CD8-positive, alpha-beta T cell (primary cell): ENCODE measurements at regions of chr12 and their contacts with region 1.

Region 1: GRCh38 chr12:100168586-100168985 is 25.9 kb upstream of the BLTP3B start:
- DNase-seq: no peak
- ATAC-seq: no peak
- H3K4me3 ChIP-seq: no peak overlapping the region
- H3K4me3 Mint-ChIP-seq: no peak overlapping the region
- H3K27ac ChIP-seq: no peak overlapping the region
- H3K27ac Mint-ChIP-seq: no peak overlapping the region
- H3K4me1 ChIP-seq: peaks cover 6% of the 10 kb centered on the region
- H3K4me1 Mint-ChIP-seq: peaks cover 6% of the 10 kb centered on the region
- H3K27me3 ChIP-seq: no peaks in the 10 kb centered on the region
- H3K27me3 Mint-ChIP-seq: no peaks in the 10 kb centered on the region
- CTCF ChIP-seq: no peak

Region 2: DNA sequence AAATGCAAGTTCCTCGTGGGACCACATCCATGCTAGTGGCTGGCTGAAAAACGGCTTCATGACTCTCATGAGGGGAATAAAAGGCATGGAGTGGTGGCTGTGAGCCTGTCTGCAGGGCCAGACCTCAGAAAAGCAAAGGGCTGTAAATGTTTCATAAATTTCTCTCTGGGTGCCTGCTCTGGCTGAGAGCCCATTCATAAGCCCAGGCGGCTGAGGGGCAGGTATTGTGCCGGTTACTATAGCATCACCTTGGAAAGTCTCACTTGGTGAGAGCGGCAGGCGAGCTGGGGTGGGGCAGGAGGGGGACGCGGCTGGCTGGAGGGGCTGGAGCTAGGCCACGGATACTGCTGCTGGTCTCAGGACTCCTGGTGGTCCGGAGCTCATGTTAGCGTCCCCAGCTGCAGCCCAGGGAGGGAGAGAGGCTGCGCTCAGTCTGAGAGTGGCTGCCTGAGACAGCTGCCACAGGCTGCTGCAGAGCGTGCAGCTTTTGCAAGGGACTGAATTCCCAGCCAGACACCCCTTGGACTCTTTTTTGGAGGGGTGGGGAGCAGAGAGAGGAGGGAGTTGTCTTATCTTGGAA is 188.1 kb after region 1 on chr12 and contains the start of gene SLC17A8:
- CTCF ChIA-PET with region 1: no interaction called
- POLR2A ChIA-PET with region 1: no interaction called
- intact Hi-C with region 1: no loop called
- DNase-seq: no peak
- ATAC-seq: no peak
- H3K4me3 ChIP-seq: no peak within 1 kb of the TSS
- H3K4me3 Mint-ChIP-seq: no peak within 1 kb of the TSS
- H3K27ac ChIP-seq: no peak within 1 kb of the TSS
- H3K27ac Mint-ChIP-seq: no peak within 1 kb of the TSS
- H3K4me1 ChIP-seq: no peaks in the 10 kb centered on the region
- H3K4me1 Mint-ChIP-seq: no peaks in the 10 kb centered on the region
- H3K27me3 ChIP-seq: no peaks in the 10 kb centered on the region
- H3K27me3 Mint-ChIP-seq: peaks cover 39% of the 10 kb centered on the region
- CTCF ChIP-seq: no peak
- total RNA-seq, gene SLC17A8: not detected

Region 3: DNA sequence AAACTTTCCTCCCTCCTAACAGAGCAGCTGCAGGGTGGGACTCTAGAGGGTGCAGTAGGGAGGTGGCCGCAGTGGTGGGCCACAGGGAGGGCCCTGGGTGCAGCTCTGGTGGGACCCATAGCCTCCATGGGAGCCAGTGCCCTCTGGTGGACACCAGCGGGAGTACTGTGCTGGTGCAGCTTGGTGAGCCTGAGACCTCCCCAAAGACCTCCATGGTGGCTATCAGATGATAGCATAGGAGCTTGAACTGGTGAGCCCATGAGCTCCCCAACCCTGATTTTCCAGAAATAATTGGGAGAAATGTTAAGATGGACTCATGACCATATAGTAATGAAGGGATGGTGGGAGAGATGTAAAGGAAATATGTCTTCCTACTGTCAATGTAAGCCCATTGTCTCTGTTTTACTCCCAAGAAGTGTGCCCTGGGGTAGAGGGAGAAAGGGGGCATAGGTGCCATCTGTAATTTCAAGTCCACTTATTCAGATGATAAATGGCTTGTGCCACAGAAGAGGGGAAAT is 503.5 kb after region 1 on chr12:
- CTCF ChIA-PET with region 1: no interaction called
- POLR2A ChIA-PET with region 1: no interaction called
- intact Hi-C with region 1: loop called in 1 of 2 experiments (anchors 5 kb)
- DNase-seq: peak in 3 of 9 experiments; percentile 8 to 16 (median 15)
- ATAC-seq: no peak
- H3K4me3 ChIP-seq: no peak overlapping the region
- H3K4me3 Mint-ChIP-seq: no peak overlapping the region
- H3K27ac ChIP-seq: no peak overlapping the region
- H3K27ac Mint-ChIP-seq: no peak overlapping the region
- H3K4me1 ChIP-seq: no peaks in the 10 kb centered on the region
- H3K4me1 Mint-ChIP-seq: no peaks in the 10 kb centered on the region
- H3K27me3 ChIP-seq: no peaks in the 10 kb centered on the region
- H3K27me3 Mint-ChIP-seq: peaks cover 5% of the 10 kb centered on the region
- CTCF ChIP-seq: no peak